Activated B cell treated with CpG ODN at 0.5 μM for 24 hours (primary cell): ENCODE measurements at regions of chr18 and their contacts with region 1.

Region 1: DNA sequence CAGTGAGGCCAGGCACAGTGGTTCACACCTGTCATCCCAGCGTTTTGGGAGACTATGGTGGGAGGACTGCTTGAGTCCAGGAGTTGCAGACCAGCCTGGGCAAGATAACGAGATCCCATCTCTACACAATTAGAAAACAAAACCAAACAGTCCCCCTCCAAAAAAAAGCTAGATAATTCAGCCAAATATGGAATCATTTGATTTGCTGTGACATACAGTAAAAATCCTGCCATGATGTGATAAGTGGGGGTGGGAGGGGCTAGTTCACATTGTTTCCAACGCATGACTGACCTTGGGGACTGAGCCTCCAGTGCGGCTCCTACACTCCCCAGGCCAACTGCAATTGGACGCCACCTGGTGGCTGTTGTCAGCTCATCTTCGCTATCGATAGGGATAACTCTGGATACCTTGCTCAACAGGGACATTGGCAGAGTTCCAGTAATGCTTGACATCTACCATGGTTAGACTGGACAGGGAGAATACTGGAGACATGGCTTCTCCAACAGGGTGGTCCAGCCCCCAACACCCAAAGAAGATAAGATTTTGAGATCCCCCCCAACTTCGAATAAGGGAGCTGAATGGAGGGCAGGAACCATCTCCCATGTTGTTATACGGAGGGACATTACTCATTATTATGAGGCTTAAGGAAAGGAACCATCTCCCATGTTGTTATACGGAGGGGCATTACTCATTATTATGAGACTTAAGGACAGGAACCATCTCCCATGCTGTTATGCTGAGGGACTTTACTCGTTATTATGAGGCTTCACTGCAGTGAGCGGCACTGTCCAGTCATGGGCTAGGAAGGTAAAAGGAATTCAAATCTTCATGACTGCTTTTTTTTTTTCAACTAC is 135.9 kb downstream of the TGIF1 start:
- DNase-seq: peak; percentile 40
- ATAC-seq: peak; percentile 45
- H3K4me3 Mint-ChIP-seq: peak overlapping the region; percentile 74
- H3K27ac Mint-ChIP-seq: peak overlapping the region; percentile 96
- H3K4me1 Mint-ChIP-seq: peaks cover 53% of the 10 kb centered on the region
- H3K27me3 Mint-ChIP-seq: no peaks in the 10 kb centered on the region
- CTCF ChIP-seq: no peak

Region 2: GRCh38 chr18:3177902-3178687 is 407.8 kb before region 1 on chr18:
- CTCF ChIA-PET with region 1: no interaction called
- POLR2A ChIA-PET with region 1: no interaction called
- intact Hi-C with region 1: loop called (anchors 1 kb)
- DNase-seq: peak; percentile 66
- ATAC-seq: peak; percentile 86
- H3K4me3 Mint-ChIP-seq: peak overlapping the region; percentile 76
- H3K27ac Mint-ChIP-seq: peak overlapping the region; percentile 99
- H3K4me1 Mint-ChIP-seq: peaks cover 32% of the 10 kb centered on the region
- H3K27me3 Mint-ChIP-seq: no peaks in the 10 kb centered on the region
- CTCF ChIP-seq: no peak

Region 3: GRCh38 chr18:3321133-3321812 is 264.6 kb before region 1 on chr18:
- CTCF ChIA-PET with region 1: no interaction called
- POLR2A ChIA-PET with region 1: interaction called, 12 read pairs
- intact Hi-C with region 1: no loop called
- DNase-seq: no peak
- ATAC-seq: no peak
- H3K4me3 Mint-ChIP-seq: no peak overlapping the region
- H3K27ac Mint-ChIP-seq: no peak overlapping the region
- H3K4me1 Mint-ChIP-seq: peaks cover 24% of the 10 kb centered on the region
- H3K27me3 Mint-ChIP-seq: no peaks in the 10 kb centered on the region
- CTCF ChIP-seq: no peak

Region 4: GRCh38 chr18:3454365-3455089 is 131.4 kb before region 1 on chr18:
- CTCF ChIA-PET with region 1: interaction called, 30 read pairs
- POLR2A ChIA-PET with region 1: interaction called, 106 read pairs
- intact Hi-C with region 1: loop called (anchors 1 kb)
- DNase-seq: no peak
- ATAC-seq: no peak
- H3K4me3 Mint-ChIP-seq: peak overlapping the region; percentile 93
- H3K27ac Mint-ChIP-seq: peak overlapping the region; percentile 95
- H3K4me1 Mint-ChIP-seq: peaks cover 57% of the 10 kb centered on the region
- H3K27me3 Mint-ChIP-seq: no peaks in the 10 kb centered on the region
- CTCF ChIP-seq: no peak

Region 5: GRCh38 chr18:3511922-3512372 is 73.9 kb before region 1 on chr18:
- CTCF ChIA-PET with region 1: no interaction called
- POLR2A ChIA-PET with region 1: no interaction called
- intact Hi-C with region 1: loop called (anchors 5 kb)
- DNase-seq: no peak
- ATAC-seq: peak; percentile 86
- H3K4me3 Mint-ChIP-seq: no peak overlapping the region
- H3K27ac Mint-ChIP-seq: peak overlapping the region; percentile 31
- H3K4me1 Mint-ChIP-seq: peaks cover 11% of the 10 kb centered on the region
- H3K27me3 Mint-ChIP-seq: no peaks in the 10 kb centered on the region
- CTCF ChIP-seq: no peak

Region 6: DNA sequence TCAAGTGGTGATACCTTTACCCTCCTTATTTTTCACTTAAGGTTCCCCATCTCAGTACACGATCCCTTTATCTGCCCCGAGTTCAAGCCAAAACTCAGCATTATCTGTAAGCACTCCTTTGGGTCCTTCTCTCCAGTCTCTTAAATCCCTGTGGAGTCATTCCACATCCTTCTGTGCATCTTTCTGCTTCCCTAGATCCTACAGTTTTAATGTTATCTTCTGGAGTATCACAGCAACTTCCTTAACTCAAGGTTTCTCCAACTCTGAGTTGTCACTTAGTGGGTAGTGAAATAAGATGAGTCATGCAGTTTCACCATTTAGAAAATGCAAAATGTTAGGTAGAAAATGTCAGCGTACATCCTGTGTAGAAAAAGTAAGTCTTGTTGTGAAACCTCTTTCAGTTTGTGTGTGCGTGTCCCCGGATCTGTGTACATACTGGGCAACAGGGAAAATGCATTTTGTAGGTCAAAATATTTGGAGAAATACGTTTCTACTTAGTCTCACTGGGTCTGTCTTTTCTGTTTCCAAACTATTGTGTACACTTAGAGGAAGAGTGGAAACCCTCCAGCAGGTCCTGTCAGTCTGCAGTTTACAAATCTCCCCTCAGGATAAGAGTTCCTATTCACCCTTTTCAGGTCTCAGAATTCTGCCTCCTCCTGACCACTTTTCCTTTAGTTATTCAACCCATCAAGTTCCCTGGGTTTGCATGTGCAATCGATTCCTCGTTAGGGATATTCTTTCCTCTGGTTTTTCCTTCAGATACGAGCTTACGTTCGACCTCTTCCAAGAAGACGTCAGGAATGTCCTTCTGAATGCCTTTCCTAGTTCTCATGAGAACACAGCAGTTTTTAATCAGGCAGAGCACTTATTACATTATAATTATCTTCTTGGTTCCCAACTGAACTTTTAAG is 18.9 kb after region 1 on chr18:
- CTCF ChIA-PET with region 1: interaction called, 5 read pairs
- POLR2A ChIA-PET with region 1: interaction called, 21 read pairs
- intact Hi-C with region 1: no loop called
- DNase-seq: no peak
- ATAC-seq: peak; percentile 73
- H3K4me3 Mint-ChIP-seq: no peak overlapping the region
- H3K27ac Mint-ChIP-seq: no peak overlapping the region
- H3K4me1 Mint-ChIP-seq: peaks cover 3% of the 10 kb centered on the region
- H3K27me3 Mint-ChIP-seq: no peaks in the 10 kb centered on the region
- CTCF ChIP-seq: no peak